SK-N-SH (cell line): ENCODE measurements at regions of chr1 and their contacts with region 1.

Region 1: DNA sequence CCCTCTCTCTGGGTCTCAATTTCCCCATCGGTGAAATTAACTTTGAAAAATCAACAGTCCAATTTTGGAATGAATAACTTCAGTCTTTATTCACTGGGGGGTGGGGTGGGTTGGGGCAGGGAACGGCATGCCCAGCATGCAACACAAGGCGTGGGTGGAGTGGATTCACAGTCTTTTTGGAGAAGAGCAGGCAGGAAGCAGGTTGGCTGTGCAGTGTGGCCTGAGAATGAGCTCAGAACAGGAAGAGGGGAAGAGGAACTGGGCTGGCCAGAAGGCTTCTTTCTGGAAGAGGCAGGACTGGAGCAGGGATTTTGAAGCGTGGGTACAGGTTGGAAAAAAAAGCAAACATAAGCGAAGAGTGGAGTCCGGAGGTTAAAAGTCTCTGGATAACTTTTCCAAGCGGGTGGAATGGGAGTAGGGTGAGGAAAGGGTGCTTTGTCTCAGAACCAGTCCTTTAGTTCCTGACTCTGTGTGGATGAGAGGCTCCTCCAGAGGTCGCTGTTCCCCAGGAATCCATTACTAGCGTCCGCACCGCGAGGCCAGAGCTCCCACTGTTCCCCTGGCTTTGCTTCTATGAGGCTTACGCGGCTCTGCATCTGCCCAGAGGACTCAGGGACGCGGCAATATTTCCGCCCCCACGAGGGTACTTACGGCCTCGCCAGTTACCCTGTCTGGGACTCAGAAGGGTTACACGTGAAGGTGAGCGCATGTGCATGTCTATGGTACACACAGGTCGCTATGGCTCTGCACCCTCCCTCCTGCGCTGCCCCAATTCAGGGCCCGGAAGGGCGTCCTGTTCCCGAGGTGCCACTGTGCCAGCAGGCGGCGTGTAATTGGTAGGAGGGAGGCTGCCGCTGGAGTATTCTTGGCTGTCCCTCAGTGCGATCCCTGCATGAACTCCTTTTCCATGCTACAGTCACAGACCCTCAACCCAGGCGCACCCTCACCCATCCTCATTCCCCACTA is 5.5 kb upstream of the FOXD2 start:
- DNase-seq: peak; percentile 82
- H3K4me3 ChIP-seq: peak overlapping the region in 1 of 2 experiments; percentile 29; a peak in 2 of 4 replicates
- H3K27ac ChIP-seq: no peak overlapping the region
- H3K4me1 ChIP-seq: peaks cover 0 to 10% of the 10 kb centered on the region in 2 experiments; a peak in 1 of 4 replicates
- H3K27me3 ChIP-seq: peaks cover 37% of the 10 kb centered on the region; the same call in 1 of the 2 replicates
- CTCF ChIP-seq: peak; percentile 85
- EP300 ChIP-seq: no peak
- RAD21 ChIP-seq: peak; percentile 92

Region 2: GRCh38 chr1:47241114-47242113 is 190.9 kb before region 1 on chr1:
- CTCF ChIA-PET with region 1: no interaction called
- POLR2A ChIA-PET with region 1: no interaction called
- DNase-seq: no peak
- H3K4me3 ChIP-seq: no peak overlapping the region
- H3K27ac ChIP-seq: no peak overlapping the region
- H3K4me1 ChIP-seq: no peaks in the 10 kb centered on the region
- H3K27me3 ChIP-seq: peaks cover 4% of the 10 kb centered on the region; the same call in 1 of the 2 replicates
- CTCF ChIP-seq: no peak
- EP300 ChIP-seq: no peak
- RAD21 ChIP-seq: no peak

Region 3: DNA sequence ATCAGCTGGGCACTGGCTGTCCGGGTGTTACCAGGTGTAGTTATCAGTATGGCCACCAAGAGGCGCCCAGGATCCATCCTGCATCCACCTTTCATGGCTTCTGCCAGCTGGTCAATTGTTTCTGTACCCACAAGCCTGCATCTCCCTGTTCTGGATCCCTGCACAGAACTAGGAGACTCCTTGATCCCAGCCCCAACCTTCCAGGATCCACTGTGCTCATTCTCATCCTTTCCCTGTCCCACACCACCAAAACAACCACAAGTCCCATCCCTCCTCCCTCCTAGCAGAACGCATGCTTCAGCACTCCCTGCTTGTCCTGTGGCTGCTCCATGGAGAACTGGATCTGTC is 43.5 kb before region 1 on chr1:
- CTCF ChIA-PET with region 1: interaction called, 34 read pairs
- POLR2A ChIA-PET with region 1: no interaction called
- DNase-seq: peak; percentile 80
- H3K4me3 ChIP-seq: no peak overlapping the region
- H3K27ac ChIP-seq: no peak overlapping the region
- H3K4me1 ChIP-seq: peaks cover 0 to 10% of the 10 kb centered on the region in 2 experiments; a peak in 1 of 4 replicates
- H3K27me3 ChIP-seq: no peaks in the 10 kb centered on the region
- CTCF ChIP-seq: peak; percentile 69
- EP300 ChIP-seq: no peak
- RAD21 ChIP-seq: peak; percentile 84

Region 4: GRCh38 chr1:47409311-47410070 is 22.9 kb before region 1 on chr1:
- CTCF ChIA-PET with region 1: interaction called, 12 read pairs
- POLR2A ChIA-PET with region 1: no interaction called
- DNase-seq: no peak
- H3K4me3 ChIP-seq: no peak overlapping the region
- H3K27ac ChIP-seq: no peak overlapping the region
- H3K4me1 ChIP-seq: no peaks in the 10 kb centered on the region
- H3K27me3 ChIP-seq: no peaks in the 10 kb centered on the region
- CTCF ChIP-seq: no peak
- EP300 ChIP-seq: no peak
- RAD21 ChIP-seq: no peak

Region 5: GRCh38 chr1:47449822-47450552 is 17.6 kb after region 1 on chr1:
- CTCF ChIA-PET with region 1: interaction called, 94 read pairs
- POLR2A ChIA-PET with region 1: interaction called, 3 read pairs
- DNase-seq: peak; percentile 67
- H3K4me3 ChIP-seq: no peak overlapping the region; a peak in 1 of 4 replicates
- H3K27ac ChIP-seq: no peak overlapping the region
- H3K4me1 ChIP-seq: no peaks in the 10 kb centered on the region; a peak in 1 of 4 replicates
- H3K27me3 ChIP-seq: peaks cover 73% of the 10 kb centered on the region
- CTCF ChIP-seq: peak; percentile 53
- EP300 ChIP-seq: no peak
- RAD21 ChIP-seq: peak; percentile 53

Region 6: GRCh38 chr1:47507881-47508701 is 75.7 kb after region 1 on chr1:
- CTCF ChIA-PET with region 1: interaction called, 11 read pairs
- POLR2A ChIA-PET with region 1: no interaction called
- DNase-seq: peak; percentile 80
- H3K4me3 ChIP-seq: peak overlapping the region; percentile 44 to 46
- H3K27ac ChIP-seq: no peak overlapping the region
- H3K4me1 ChIP-seq: peaks cover 0 to 13% of the 10 kb centered on the region in 2 experiments; a peak in 1 of 4 replicates
- H3K27me3 ChIP-seq: peaks cover 31% of the 10 kb centered on the region
- CTCF ChIP-seq: no peak
- EP300 ChIP-seq: no peak
- RAD21 ChIP-seq: no peak